ENCODE measurements at regions of chr4 and their contacts with region 1.

Region 1: GRCh38 chr4:139603576-139604387 is 47.8 kb upstream of the SETD7 start:
- DNase-seq: peak; percentile 55
- H3K4me3 ChIP-seq: no peak overlapping the region
- H3K27ac ChIP-seq: no peak overlapping the region
- H3K4me1 ChIP-seq: peaks cover 0 to 17% of the 10 kb centered on the region in 2 experiments; a peak in 1 of 4 replicates
- H3K27me3 ChIP-seq: no peaks in the 10 kb centered on the region
- CTCF ChIP-seq: peak; percentile 82
- EP300 ChIP-seq: no peak
- RAD21 ChIP-seq: peak; percentile 84

Region 2: DNA sequence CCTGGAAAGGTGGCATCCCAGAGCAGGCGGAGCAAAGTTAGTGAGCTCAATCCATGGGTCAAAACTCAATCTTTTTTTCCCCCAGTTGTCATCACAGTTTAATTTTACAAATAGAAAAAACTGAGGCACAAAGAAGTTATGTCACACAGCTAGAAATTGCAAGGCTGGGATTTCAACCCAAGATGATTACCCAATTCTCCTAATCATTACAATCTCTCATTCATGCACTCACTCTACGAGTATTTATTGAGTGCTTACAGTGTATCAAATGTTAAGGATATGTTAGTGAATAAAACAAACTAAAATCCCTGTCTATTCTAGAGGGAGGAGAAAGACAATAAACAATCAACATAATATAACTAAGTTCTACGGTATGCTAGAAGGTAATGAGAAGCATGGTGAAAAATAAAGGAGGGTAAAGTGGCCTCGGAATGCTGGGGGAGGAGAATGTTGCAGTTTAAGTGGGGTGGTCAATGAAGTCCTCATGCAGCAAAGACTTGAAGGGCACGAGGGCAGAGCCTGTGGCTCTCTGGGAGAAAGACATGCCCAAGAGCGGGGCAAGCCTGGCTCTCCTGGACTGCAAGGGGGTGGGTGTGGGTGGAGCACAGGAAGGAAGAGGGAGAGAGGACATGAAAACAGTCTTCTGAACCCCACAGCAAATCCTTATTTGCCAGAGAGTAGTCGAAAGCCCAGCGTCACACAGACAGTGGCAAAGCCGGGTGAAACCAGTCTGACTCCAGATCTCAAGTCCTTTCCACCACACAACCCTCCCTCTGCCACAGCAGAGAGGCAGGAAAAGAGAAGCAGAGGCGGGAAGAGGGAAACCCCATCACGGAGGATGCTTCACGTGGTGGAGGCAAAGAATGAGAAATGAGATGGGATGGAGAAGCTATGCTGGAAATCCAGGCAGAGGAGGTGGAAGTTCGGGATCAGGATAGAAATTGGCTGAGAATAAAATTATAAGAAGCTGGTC is 101.6 kb before region 1 on chr4:
- CTCF ChIA-PET with region 1: interaction called, 12 read pairs
- POLR2A ChIA-PET with region 1: no interaction called
- DNase-seq: no peak
- H3K4me3 ChIP-seq: no peak overlapping the region
- H3K27ac ChIP-seq: no peak overlapping the region
- H3K4me1 ChIP-seq: no peaks in the 10 kb centered on the region; a peak in 1 of 4 replicates
- H3K27me3 ChIP-seq: no peaks in the 10 kb centered on the region
- CTCF ChIP-seq: no peak
- EP300 ChIP-seq: no peak
- RAD21 ChIP-seq: no peak

Region 3: GRCh38 chr4:139582044-139582443 is 21.7 kb before region 1 on chr4:
- CTCF ChIA-PET with region 1: interaction called, 16 read pairs
- POLR2A ChIA-PET with region 1: no interaction called
- DNase-seq: no peak
- H3K4me3 ChIP-seq: no peak overlapping the region
- H3K27ac ChIP-seq: no peak overlapping the region
- H3K4me1 ChIP-seq: no peaks in the 10 kb centered on the region; a peak in 1 of 4 replicates
- H3K27me3 ChIP-seq: no peaks in the 10 kb centered on the region
- CTCF ChIP-seq: peak; percentile 25; the same call in 1 of the 2 replicates
- EP300 ChIP-seq: no peak
- RAD21 ChIP-seq: peak; percentile 30; the same call in 1 of the 2 replicates

Region 4: DNA sequence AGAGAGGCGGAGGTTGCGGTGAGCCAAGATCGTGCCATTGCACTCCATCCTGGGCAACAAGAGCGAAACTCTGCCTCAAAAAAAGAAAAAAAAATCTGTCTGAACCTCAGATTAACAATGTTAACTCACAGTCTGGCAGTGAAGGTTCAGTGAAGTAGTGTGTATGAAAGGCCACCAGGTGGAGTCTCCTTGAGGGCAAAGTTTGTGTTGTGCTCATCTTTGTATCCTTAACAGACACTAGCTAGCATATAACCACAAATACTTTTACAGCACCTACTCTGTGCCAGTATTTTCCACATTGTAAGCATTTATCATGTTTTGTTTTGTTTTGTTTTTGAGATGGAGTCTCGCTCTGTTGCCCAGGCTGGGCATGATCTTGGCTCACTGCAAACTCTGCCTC is 15.9 kb after region 1 on chr4:
- CTCF ChIA-PET with region 1: interaction called, 38 read pairs
- POLR2A ChIA-PET with region 1: no interaction called
- DNase-seq: no peak
- H3K4me3 ChIP-seq: no peak overlapping the region
- H3K27ac ChIP-seq: no peak overlapping the region
- H3K4me1 ChIP-seq: no peaks in the 10 kb centered on the region
- H3K27me3 ChIP-seq: no peaks in the 10 kb centered on the region
- CTCF ChIP-seq: peak; percentile 49
- EP300 ChIP-seq: no peak
- RAD21 ChIP-seq: peak; percentile 27; the same call in 1 of the 2 replicates

Region 5: GRCh38 chr4:139633661-139634060 is 29.9 kb after region 1 on chr4:
- CTCF ChIA-PET with region 1: interaction called, 11 read pairs
- POLR2A ChIA-PET with region 1: no interaction called
- DNase-seq: no peak
- H3K4me3 ChIP-seq: no peak overlapping the region
- H3K27ac ChIP-seq: no peak overlapping the region
- H3K4me1 ChIP-seq: no peaks in the 10 kb centered on the region
- H3K27me3 ChIP-seq: no peaks in the 10 kb centered on the region; the same call in 1 of the 2 replicates
- CTCF ChIP-seq: peak; percentile 42
- EP300 ChIP-seq: no peak
- RAD21 ChIP-seq: peak; percentile 57

Region 6: DNA sequence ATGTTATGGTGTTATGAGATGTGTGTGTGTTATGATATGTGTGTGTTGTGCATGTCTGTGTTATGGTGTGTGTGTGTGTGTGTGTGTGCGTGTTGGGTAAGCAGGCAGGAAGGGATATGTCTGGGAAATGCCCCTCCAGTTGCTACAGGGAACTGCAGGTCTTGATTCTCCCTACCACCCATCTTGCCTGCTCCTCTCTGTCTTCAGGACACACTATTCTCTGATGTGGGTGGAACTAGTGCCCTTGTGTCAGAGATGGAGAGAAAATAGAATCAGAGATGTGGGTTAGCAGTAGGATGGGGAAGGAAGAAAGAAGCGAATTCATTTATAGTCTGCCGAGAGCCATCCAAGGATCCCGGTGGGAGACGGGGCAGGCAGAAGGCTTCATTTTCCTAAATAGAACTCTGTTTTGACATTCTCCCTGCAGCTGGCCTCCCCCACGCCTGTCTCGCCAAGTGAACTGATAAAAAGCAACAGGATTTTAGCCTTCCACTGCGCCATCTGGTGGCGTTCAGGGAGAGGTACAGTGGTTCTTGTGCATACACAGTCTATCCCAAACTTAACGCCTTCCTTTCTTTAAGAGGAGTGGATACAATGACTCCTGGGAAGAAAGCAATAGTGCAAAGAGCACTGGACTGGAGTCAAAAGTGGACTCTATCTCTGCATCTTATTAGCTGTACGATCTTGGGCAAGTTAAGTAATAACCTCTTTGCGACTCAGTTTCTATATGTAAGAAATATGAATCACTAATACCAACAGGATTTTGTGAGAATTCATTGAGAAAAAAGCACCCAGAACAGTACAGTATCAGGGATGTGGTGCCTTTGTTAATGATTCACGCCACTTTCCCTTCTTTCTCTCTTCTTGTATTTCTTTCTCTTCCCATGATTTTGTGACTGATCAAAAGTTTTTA is 47.8 kb after region 1 on chr4:
- CTCF ChIA-PET with region 1: interaction called, 157 read pairs
- POLR2A ChIA-PET with region 1: no interaction called
- DNase-seq: peak; percentile 64
- H3K4me3 ChIP-seq: peak overlapping the region in 1 of 2 experiments; percentile 23; a peak in 1 of 4 replicates
- H3K27ac ChIP-seq: no peak overlapping the region
- H3K4me1 ChIP-seq: peaks cover 0 to 11% of the 10 kb centered on the region in 2 experiments; a peak in 1 of 4 replicates
- H3K27me3 ChIP-seq: no peaks in the 10 kb centered on the region
- CTCF ChIP-seq: peak; percentile 93
- EP300 ChIP-seq: no peak
- RAD21 ChIP-seq: peak; percentile 81